Calu3 (cell line): ENCODE measurements at regions of chr1 and their contacts with region 1.

Region 1: DNA sequence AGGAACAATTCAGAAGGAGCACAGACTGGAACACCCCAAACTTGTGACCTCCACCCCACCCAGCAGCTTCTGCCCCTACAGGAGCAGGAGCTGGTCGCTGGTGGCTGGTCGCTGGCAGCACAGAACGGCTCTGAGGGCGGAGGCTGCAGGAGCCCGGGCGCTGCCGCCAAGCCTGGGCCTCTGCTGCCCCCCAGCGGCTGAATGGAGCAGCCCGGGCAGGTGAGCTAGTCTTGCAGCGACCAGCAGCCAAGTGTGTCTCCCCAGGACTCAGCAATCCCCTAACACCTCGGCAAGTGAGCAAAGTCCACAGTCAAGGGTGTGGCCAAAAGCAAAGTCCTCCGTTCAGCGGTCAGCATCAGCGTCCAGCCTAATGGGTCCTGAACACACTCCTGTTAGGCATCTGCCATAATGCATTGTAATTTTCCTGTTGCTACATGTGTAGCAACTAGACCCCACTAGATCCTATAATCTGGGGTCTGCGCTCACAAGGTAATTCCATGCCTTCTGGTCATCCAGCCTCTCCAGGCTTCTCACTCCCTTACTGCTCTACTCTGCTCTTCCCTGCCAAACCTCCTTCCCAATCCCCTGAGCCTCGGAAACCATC is 12.1 kb upstream of the GJB5 start:
- DNase-seq: peak; percentile 95
- H3K4me3 Mint-ChIP-seq: no peak overlapping the region
- H3K27ac Mint-ChIP-seq: no peak overlapping the region
- H3K4me1 Mint-ChIP-seq: peaks cover 15% of the 10 kb centered on the region
- H3K27me3 Mint-ChIP-seq: no peaks in the 10 kb centered on the region
- CTCF ChIP-seq: peak; percentile 94

Region 2: GRCh38 chr1:33633019-33633801 is 1109.6 kb before region 1 on chr1:
- CTCF ChIA-PET with region 1: no interaction called
- intact Hi-C with region 1: loop called (anchors 5 kb)
- DNase-seq: peak; percentile 93
- H3K4me3 Mint-ChIP-seq: peak overlapping the region; percentile 38
- H3K27ac Mint-ChIP-seq: no peak overlapping the region
- H3K4me1 Mint-ChIP-seq: no peaks in the 10 kb centered on the region
- H3K27me3 Mint-ChIP-seq: peaks cover 84% of the 10 kb centered on the region
- CTCF ChIP-seq: peak; percentile 92

Region 3: GRCh38 chr1:34549199-34549598 is 193.6 kb before region 1 on chr1:
- CTCF ChIA-PET with region 1: no interaction called
- intact Hi-C with region 1: loop called (anchors 2 kb)
- DNase-seq: peak; percentile 76
- H3K4me3 Mint-ChIP-seq: no peak overlapping the region
- H3K27ac Mint-ChIP-seq: no peak overlapping the region
- H3K4me1 Mint-ChIP-seq: no peaks in the 10 kb centered on the region
- H3K27me3 Mint-ChIP-seq: peaks cover 26% of the 10 kb centered on the region
- CTCF ChIP-seq: peak; percentile 30

Region 4: GRCh38 chr1:34645921-34646320 is 96.8 kb before region 1 on chr1:
- CTCF ChIA-PET with region 1: interaction called, 7 read pairs
- intact Hi-C with region 1: loop called (anchors 1 kb)
- DNase-seq: no peak
- H3K4me3 Mint-ChIP-seq: no peak overlapping the region
- H3K27ac Mint-ChIP-seq: no peak overlapping the region
- H3K4me1 Mint-ChIP-seq: no peaks in the 10 kb centered on the region
- H3K27me3 Mint-ChIP-seq: peaks cover 94% of the 10 kb centered on the region
- CTCF ChIP-seq: no peak

Region 5: DNA sequence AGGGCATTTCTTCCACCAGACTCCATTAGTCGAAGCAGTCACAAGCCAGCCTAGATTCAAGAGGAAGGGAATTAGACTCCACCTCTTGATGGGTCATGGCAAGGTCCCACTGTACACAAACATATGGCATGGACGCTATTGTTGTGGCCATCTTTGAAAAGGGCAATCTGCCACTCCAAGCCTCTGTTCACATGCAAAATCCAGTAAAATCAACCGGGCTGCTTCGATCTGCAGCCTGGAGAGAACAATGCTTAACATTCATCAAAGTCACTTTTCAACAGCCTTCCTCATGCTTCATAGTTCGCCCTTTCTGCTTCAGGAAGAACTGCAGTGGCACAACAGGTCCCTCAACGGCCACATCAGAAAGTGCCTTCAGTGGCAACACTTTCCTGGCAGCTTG is 15.9 kb before region 1 on chr1:
- CTCF ChIA-PET with region 1: interaction called, 10 read pairs
- intact Hi-C with region 1: no loop called
- DNase-seq: no peak
- H3K4me3 Mint-ChIP-seq: no peak overlapping the region
- H3K27ac Mint-ChIP-seq: no peak overlapping the region
- H3K4me1 Mint-ChIP-seq: no peaks in the 10 kb centered on the region
- H3K27me3 Mint-ChIP-seq: peaks cover 73% of the 10 kb centered on the region
- CTCF ChIP-seq: no peak